Activated T-helper 2 cell treated with anti-CD3 and anti-CD28 coated beads, Interferon-gamma antibody, Interleukin-2, Interleukin-4, amounts not matched to agents 10 μg/mL and 5 μg/mL and 100 μg/mL, durations not matched to agents 14 hours and 24 hours and 36 hours (primary cell): ENCODE measurements at regions of chr13 and their contacts with region 1.

Region 1: DNA sequence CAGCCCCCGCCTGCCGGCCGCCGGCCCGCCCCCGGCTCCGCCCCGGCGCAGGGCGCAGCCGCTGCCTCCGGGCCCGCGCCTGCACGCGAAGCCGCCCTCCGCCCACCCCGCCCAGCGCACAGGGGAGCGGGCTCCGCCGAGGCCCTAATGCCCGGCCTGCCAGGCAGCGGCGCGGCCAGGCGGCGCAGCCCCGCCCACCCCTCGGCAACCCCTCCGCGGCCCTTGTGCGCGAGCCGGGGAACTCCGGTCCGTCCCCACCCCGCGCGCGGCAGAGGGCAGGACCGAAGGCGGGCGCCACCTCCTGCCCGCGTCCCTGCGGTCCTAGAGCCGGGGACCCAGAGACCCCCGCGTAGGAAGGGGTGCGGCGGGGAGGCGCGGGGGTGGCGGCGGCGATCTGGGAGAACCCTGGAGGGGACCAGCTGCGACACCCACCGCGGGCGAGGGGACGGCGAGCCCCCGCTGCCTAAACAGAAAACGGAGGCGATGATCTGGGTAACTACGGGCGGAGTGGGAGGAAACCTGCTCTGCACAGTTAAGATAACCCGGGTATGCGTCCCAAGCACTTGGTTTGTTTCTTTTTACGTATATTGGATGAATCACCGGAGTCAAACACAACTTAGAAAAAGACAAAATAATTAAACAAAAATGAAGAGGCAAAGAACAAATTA is 350 bp upstream of the USP12 start:
- DNase-seq: peak; percentile 86
- H3K4me3 Mint-ChIP-seq: peak overlapping the region; percentile 80
- H3K27ac Mint-ChIP-seq: peak overlapping the region; percentile 88
- H3K4me1 Mint-ChIP-seq: peaks cover 53% of the 10 kb centered on the region
- H3K27me3 Mint-ChIP-seq: no peaks in the 10 kb centered on the region

Region 2: GRCh38 chr13:27147530-27148170 is 24.3 kb before region 1 on chr13:
- intact Hi-C with region 1: loop called (anchors 2 kb)
- DNase-seq: no peak
- H3K4me3 Mint-ChIP-seq: peak overlapping the region; percentile 26
- H3K27ac Mint-ChIP-seq: peak overlapping the region; percentile 93
- H3K4me1 Mint-ChIP-seq: peaks cover 52% of the 10 kb centered on the region
- H3K27me3 Mint-ChIP-seq: no peaks in the 10 kb centered on the region

Region 3: DNA sequence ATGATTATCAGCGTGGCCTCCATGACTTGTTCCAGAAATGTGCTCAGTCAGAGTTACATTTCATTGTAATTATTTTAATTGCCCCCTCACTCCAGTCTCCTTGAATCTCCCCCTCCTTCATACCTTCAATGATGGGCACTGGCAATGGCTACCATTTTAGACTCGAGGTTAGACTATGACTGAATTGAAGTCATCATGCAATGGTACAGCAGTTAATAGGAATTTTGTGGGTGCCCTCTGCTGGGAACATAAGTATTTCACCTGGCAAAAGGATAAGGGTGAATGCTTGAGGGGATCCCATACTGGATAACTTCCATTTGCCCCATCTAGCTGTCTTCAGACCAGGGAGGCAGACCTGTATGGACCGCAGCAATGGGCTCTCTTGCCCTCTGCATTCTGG is 31.9 kb after region 1 on chr13:
- intact Hi-C with region 1: loop called (anchors 1 kb)
- DNase-seq: no peak
- H3K4me3 Mint-ChIP-seq: no peak overlapping the region
- H3K27ac Mint-ChIP-seq: no peak overlapping the region
- H3K4me1 Mint-ChIP-seq: peaks cover 12% of the 10 kb centered on the region
- H3K27me3 Mint-ChIP-seq: no peaks in the 10 kb centered on the region

Region 4: DNA sequence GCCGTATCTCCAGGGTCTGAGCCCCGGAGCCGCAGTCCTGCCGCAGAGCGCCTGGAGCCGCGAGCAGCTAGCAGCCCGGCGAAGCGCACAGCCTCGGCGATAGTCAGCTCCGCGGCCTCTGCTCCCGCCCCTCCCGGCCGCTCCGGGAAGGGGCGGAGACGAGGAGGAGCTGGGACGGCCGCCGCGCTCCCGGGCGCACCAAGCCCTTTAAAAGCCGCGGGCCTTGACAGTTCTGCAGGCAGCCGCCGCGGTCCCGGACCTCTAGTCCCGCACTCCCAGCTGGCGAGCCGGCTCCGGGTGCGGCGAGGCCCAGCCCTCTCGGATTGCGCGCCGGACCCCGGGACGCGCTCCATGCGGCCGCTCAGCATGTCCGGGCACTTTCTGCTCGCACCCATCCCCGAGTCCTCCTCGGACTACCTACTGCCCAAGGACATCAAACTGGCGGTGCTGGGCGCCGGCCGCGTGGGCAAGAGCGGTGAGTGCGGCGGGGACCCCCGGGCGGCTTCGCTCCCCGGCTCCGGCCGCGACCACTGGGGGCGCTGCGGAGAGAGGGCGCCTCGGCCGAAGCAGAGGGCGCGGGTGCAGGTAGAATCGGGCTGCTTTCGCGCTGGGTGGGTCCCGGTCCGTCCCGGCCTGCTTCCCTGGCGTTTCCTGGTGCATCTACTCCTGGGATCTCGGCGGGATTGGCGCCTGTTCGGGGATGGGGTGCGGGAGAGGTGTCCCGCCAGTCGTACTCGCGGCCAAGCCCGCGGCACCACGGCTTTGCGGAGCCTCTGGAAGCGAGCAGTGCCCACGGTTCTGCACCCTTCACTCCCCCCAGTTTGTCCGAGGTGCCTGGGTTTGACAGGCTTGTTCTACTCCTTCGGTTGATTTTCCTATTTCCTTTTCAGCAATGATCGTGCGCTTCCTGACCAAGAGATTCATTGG is 98.9 kb after region 1 on chr13 and contains the start of gene RASL11A:
- intact Hi-C with region 1: loop called (anchors 5 kb)
- DNase-seq: peak; percentile 60
- H3K4me3 Mint-ChIP-seq: peak within 1 kb of the TSS; percentile 88
- H3K27ac Mint-ChIP-seq: peak within 1 kb of the TSS; percentile 61
- H3K4me1 Mint-ChIP-seq: peaks cover 10% of the 10 kb centered on the region
- H3K27me3 Mint-ChIP-seq: peaks cover 44% of the 10 kb centered on the region
- total RNA-seq, gene RASL11A: 1.3 and 1.7 TPM in 2 replicates

Region 5: DNA sequence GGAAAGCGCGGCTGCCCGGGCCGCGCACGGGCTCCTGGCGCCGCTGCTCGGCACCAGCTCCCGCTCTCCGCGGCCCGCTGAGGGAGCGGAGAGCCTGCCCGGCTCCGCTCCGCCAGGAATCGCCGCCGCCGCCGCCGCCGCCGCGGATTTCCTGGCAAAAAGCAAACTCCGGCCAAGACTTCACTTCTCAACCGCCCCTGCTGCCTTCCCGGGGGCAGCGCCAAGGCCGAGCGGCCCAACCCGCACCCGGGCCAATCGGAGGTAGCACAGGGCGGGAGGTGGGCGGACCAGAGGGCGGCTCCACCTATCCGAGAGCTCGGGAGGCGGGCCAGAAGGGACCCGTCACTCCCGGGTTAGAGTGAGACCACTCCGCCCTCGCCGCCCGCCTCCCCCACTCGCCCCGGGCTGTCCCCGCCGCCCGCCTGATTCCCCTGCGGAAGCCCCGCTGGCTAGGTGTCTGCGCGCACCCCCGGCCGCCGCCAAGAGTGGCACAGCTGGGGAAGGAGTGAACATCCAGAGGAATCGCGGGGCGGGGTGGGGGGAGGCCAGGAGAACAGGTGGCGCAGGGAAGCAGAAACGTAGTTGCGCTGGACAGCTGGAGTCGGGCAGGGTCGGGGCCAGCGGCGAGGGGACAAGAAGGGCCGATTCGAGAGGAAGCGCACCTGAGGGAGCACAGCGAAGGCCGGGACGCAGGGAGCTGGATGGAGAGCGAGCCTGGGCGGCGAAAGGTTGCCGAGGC is 448.6 kb after region 1 on chr13 and contains the start of gene LNX2:
- intact Hi-C with region 1: loop called (anchors 5 kb)
- DNase-seq: peak; percentile 95
- H3K4me3 Mint-ChIP-seq: peak within 1 kb of the TSS; percentile 90
- H3K27ac Mint-ChIP-seq: peak within 1 kb of the TSS; percentile 88
- H3K4me1 Mint-ChIP-seq: peaks cover 47% of the 10 kb centered on the region
- H3K27me3 Mint-ChIP-seq: no peaks in the 10 kb centered on the region
- total RNA-seq, gene LNX2: 5.2 and 5.4 TPM in 2 replicates

Region 6: DNA sequence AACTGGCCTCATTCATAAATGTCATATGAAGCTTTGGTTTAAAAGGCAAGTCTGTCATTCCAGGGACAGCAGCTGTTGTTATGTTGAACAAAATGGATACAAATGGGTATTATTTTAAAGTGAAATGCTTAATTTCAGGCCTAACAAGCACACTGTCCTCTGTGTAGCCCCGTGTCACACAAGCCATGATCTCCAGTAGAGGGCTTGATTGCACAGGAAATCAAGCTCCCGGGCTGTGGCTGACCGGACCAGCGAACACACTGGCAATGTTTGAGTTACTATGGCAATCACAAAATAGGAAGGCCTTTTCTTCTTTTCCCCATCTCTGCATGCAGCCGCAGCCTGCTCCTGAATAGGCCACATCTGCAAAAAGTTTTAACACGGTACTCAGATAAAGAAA is 556.3 kb after region 1 on chr13:
- intact Hi-C with region 1: no loop called
- DNase-seq: no peak
- H3K4me3 Mint-ChIP-seq: no peak overlapping the region
- H3K27ac Mint-ChIP-seq: no peak overlapping the region
- H3K4me1 Mint-ChIP-seq: peaks cover 6% of the 10 kb centered on the region
- H3K27me3 Mint-ChIP-seq: peaks cover 12% of the 10 kb centered on the region